ENCODE measurements at regions of chr1 and their contacts with region 1.

Region 1: DNA sequence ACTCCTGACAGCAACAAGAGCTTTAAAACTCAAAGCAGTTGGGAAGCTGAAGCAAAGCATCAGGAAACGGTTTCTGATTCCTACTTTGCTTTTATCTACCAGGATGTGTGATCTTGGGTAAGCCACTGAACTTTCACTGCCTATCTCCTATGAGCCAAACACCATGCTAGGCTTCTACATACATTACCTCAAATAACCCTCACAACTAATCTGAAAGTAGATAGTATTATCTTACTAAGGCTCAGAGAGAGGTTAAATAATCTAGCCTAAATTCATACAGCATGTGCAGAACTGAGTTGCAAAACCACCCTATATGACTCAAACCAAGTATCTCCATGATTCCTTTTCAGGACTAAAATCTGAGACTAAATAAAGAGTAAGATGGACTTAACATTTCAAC is 83.8 kb downstream of the EVI5 start:
- DNase-seq: no peak

Region 2: GRCh38 chr1:92367496-92367895 is 333.7 kb before region 1 on chr1:
- intact Hi-C with region 1: loop called (anchors 5 kb)
- DNase-seq: no peak